ENCODE measurements at regions of chrX and their contacts with region 1.

Region 1: GRCh38 chrX:46561824-46562657 is 11.5 kb upstream of the CHST7 start:
- DNase-seq: no peak
- ATAC-seq: peak; percentile 89

Region 2: DNA sequence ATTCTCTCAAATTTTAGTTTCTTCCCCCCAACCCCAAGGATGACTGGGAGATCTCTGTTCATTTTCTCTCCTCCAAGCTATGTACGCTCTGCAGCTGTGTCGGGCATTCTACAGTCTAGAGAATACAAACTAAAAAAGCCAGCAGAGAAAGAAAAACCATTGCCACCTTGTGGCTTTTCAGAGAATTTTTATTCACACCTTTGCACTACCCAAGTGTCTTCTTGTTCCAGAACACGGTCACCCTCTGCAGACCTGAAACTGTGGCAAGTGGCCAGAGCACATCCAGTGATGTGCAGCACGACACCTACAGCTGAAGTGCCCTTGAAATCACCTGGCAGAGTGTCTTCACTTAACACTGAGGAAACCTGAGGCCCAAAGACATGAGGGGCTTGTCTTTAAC is 80.1 kb after region 1 on chrX:
- intact Hi-C with region 1: loop called (anchors 10 kb)
- DNase-seq: peak; percentile 35
- ATAC-seq: peak; percentile 92

Region 3: DNA sequence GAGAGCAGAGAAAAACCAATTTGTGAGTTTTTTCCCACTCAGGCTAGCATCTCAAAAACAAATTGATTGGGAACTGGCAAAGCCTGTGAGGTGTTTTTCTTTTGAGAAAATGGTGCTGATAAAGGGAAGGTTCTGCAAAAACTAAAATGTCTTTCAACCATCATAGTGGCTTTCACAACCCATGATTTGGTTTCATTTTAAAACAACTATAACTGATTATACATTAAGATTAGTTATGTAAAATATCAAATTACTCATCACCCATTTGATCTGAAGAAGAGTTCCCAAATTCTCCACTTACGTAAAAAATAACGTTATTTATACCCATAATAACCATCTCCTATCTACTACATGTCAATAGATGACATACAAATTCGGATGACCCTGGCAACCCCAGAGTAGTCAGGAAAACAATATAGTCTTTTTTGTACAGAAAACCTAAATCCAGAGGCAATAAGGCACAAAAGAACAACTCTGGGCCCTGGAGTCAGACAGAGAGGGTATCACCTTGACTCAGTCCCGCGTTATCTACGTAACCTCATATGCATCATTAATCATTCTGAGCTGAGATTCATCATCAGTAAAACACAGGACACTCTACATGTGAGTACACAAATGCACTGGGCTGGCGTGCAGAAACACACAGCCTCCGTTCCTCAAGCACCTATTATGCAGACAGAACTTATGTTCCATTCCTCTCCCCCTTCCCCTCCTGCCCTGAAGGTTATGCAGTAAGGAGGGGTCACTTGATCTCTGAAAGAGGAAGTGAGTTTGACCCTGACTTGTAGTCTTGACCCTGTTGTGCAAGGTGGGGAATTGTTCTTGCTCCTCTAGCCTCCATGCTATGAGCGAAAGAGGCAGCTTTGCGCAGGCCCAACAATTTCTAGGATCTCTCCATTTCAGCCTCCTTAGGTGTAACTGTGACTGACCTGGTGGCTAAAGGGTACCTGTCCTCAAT is 114.6 kb after region 1 on chrX:
- intact Hi-C with region 1: no loop called
- DNase-seq: no peak
- ATAC-seq: no peak

Measured in left ventricle myocardium superior (tissue), 1 donor.